Endothelial cell of umbilical vein (primary cell): ENCODE measurements at regions of chr17 and their contacts with region 1.

Region 1: GRCh38 chr17:7740481-7741001 is 23.0 kb downstream of the DNAH2 start:
- DNase-seq: no peak
- H3K4me3 ChIP-seq: no peak overlapping the region
- H3K27ac ChIP-seq: no peak overlapping the region
- H3K4me1 ChIP-seq: peaks cover 7% of the 10 kb centered on the region
- H3K27me3 ChIP-seq: peaks cover 6 to 7% of the 10 kb centered on the region in 2 experiments
- CTCF ChIP-seq: no peak
- POLR2A ChIP-seq: no peak

Region 2: GRCh38 chr17:7348478-7349242 is 391.9 kb before region 1 on chr17:
- CTCF ChIA-PET with region 1: no interaction called
- POLR2A ChIA-PET with region 1: no interaction called
- dilution Hi-C with region 1: no loop called
- intact Hi-C with region 1: no loop called
- DNase-seq: no peak
- H3K4me3 ChIP-seq: no peak overlapping the region
- H3K27ac ChIP-seq: no peak overlapping the region
- H3K4me1 ChIP-seq: peaks cover 17% of the 10 kb centered on the region
- H3K27me3 ChIP-seq: no peaks in the 10 kb centered on the region
- CTCF ChIP-seq: no peak
- POLR2A ChIP-seq: no peak

Region 3: DNA sequence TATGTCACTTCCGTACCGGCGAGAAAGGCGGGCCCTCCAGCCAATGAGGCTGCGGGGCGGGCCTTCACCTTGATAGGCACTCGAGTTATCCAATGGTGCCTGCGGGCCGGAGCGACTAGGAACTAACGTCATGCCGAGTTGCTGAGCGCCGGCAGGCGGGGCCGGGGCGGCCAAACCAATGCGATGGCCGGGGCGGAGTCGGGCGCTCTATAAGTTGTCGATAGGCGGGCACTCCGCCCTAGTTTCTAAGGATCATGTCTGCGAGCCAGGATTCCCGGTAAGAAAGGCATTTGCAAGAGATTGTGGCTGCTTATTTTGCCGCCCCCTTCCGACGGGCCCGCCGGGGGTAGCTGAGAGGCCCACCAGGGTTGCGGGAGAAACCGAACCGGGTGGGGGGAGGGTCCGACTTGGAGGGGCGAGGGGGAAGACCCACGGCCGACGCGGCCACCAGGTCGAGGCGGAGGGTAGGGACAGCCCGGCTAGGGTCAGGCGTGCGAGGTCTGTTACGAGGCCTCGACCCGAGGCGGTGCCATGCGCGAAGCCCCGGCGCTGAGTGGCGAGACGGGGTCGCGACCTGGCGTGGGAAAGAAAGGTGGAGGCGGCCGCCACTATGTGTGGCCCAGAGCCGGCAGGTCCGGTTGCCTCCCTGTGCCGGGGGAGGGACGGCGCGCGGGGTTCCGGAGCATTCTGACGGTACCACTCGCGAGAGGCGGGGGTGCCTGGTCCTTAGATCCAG is 167.8 kb before region 1 on chr17:
- CTCF ChIA-PET with region 1: no interaction called
- POLR2A ChIA-PET with region 1: no interaction called
- dilution Hi-C with region 1: no loop called
- intact Hi-C with region 1: no loop called
- DNase-seq: peak; percentile 100
- H3K4me3 ChIP-seq: peak overlapping the region; percentile 86 to 96 (median 87)
- H3K27ac ChIP-seq: peak overlapping the region; percentile 91
- H3K4me1 ChIP-seq: peaks cover 43% of the 10 kb centered on the region
- H3K27me3 ChIP-seq: no peaks in the 10 kb centered on the region
- CTCF ChIP-seq: no peak
- POLR2A ChIP-seq: peak; percentile 99

Region 4: DNA sequence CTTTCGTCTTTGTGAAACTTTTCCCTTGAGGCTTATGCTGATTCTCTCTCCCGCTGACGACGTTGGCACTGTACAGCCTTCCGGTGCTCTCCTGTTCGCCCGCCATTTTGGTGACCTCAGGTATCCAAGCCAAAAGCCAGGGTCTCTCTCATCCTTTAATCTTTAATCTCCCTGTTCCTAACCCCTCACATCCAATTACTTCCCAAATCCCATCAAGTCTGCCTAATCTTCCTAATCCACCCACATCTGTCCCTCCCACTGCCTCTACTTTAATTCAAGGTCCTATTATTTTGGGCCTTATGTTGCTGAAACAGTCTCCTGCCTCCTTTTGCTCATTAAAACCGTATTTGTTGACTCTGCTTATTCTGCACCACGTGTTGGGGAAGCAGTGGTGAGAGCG is 45.0 kb before region 1 on chr17:
- CTCF ChIA-PET with region 1: no interaction called
- POLR2A ChIA-PET with region 1: no interaction called
- dilution Hi-C with region 1: no loop called
- intact Hi-C with region 1: no loop called
- DNase-seq: no peak
- H3K4me3 ChIP-seq: no peak overlapping the region
- H3K27ac ChIP-seq: no peak overlapping the region
- H3K4me1 ChIP-seq: no peaks in the 10 kb centered on the region
- H3K27me3 ChIP-seq: no peaks in the 10 kb centered on the region
- CTCF ChIP-seq: no peak
- POLR2A ChIP-seq: no peak

Region 5: DNA sequence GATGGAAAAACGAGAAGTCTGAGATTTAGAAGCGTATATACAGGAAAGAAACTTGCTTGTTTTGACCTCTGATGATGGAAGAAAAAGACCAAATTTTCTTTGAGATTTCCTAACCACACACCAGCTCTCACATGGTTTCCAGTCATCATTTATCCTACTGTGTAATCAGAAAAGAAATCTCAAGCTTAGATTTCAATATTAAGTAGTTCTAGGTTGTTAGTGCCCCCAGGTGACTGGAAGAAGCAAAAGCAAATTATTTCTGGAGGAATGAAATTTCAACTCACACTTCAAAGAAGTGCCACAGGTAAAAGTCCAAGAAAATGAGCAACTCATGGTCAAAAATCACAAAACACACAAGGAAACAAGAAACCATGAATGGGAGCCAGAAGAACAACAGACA is 41.7 kb after region 1 on chr17:
- CTCF ChIA-PET with region 1: interaction called, 236 read pairs
- POLR2A ChIA-PET with region 1: no interaction called
- dilution Hi-C with region 1: no loop called
- intact Hi-C with region 1: loop called (anchors 1 kb)
- DNase-seq: peak; percentile 16
- H3K4me3 ChIP-seq: no peak overlapping the region
- H3K27ac ChIP-seq: no peak overlapping the region
- H3K4me1 ChIP-seq: no peaks in the 10 kb centered on the region
- H3K27me3 ChIP-seq: peaks cover 7 to 12% of the 10 kb centered on the region in 2 experiments
- CTCF ChIP-seq: no peak
- POLR2A ChIP-seq: no peak

Region 6: DNA sequence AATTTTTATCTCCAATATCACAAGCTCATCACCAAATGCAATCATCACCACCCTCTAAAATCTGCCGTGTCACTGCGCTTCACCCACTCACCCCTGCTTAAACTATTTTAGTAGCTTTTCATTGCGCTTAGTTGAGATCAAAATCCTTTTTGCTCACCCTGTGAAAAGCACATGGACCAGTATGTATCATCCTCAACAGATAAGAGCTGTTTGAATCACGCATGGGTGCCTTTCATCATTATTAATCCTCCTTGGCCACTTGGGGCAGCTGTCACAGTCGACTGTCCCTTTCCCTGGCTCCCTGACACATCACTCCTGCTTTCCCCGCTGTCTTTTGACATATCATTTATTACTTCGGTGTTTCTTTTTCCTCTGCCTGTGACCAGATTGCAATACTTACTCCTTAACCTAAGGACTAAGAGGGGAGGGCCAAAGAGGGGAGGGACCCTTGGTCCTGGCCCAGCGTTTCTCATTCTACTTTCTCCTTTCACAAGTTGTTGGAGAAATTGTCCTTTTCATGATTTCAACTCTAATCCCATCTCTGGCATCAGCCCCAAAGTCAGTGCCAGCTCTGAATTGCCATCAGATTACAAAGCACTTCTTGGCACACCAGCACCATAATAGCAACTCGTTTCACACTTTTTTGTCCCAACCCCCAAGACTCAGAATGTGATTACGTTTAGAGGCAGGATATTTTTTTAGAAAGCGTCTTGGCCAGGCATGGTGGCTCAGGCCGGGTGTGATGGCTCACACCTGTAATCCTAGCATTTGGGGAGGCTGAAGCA is 84.9 kb after region 1 on chr17:
- CTCF ChIA-PET with region 1: interaction called, 16 read pairs
- POLR2A ChIA-PET with region 1: no interaction called
- dilution Hi-C with region 1: no loop called
- intact Hi-C with region 1: loop called (anchors 5 kb)
- DNase-seq: no peak
- H3K4me3 ChIP-seq: no peak overlapping the region
- H3K27ac ChIP-seq: no peak overlapping the region
- H3K4me1 ChIP-seq: no peaks in the 10 kb centered on the region
- H3K27me3 ChIP-seq: peaks cover 0 to 6% of the 10 kb centered on the region in 2 experiments
- CTCF ChIP-seq: peak in 1 of 2 donors; percentile 4
- POLR2A ChIP-seq: no peak

Region 7: GRCh38 chr17:7851438-7852256 is 111.1 kb after region 1 on chr17:
- CTCF ChIA-PET with region 1: interaction called, 4 read pairs
- POLR2A ChIA-PET with region 1: no interaction called
- dilution Hi-C with region 1: no loop called
- intact Hi-C with region 1: loop called (anchors 1 kb)
- DNase-seq: peak; percentile 88
- H3K4me3 ChIP-seq: no peak overlapping the region
- H3K27ac ChIP-seq: no peak overlapping the region
- H3K4me1 ChIP-seq: peaks cover 20% of the 10 kb centered on the region
- H3K27me3 ChIP-seq: no peaks in the 10 kb centered on the region
- CTCF ChIP-seq: peak; percentile 91 to 98
- POLR2A ChIP-seq: no peak